Panc1 (cell line): ENCODE measurements at regions of chr5 and their contacts with region 1.

Region 1: GRCh38 chr5:142012792-142013388 is at the start of gene GNPDA1:
- DNase-seq: no peak
- ATAC-seq: peak; percentile 92
- H3K4me3 ChIP-seq: peak within 1 kb of the TSS; percentile 83 to 99
- H3K27ac ChIP-seq: peak within 1 kb of the TSS; percentile 96
- H3K4me1 ChIP-seq: peaks cover 25% of the 10 kb centered on the region
- H3K27me3 ChIP-seq: no peaks in the 10 kb centered on the region
- CTCF ChIP-seq: no peak
- total RNA-seq, gene GNPDA1: 99.9 TPM

Region 2: DNA sequence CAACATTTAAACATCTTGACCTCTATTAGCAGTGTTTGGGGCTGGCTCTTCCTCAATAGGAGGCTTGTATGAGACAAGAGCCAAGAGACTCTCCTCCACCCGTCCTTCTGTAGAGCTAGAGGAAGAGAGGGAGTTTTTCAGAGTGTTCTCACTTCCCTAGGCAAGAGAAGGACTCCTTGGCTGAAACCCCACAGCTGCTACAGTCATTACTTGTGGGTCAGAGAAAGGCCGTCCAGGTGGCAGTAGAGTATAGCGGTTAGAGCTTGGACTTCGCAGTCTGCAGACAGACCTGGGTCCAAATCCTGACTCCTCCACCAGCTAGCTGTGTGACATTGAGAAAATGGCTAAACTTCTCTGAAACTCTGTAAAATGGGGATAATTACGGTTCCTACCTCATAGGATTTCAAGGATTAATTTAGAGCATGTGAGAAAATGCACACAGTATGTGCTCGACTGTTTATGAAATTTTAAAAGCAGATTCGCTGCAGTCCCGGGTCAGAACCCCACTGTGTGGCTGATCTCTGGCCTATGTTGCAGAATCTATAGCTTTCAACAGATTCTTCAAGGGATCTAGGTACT is 250.0 kb before region 1 on chr5:
- CTCF ChIA-PET with region 1: no interaction called
- POLR2A ChIA-PET with region 1: no interaction called
- in situ Hi-C with region 1: no loop called
- intact Hi-C with region 1: no loop called
- DNase-seq: no peak
- ATAC-seq: no peak
- H3K4me3 ChIP-seq: no peak overlapping the region
- H3K27ac ChIP-seq: no peak overlapping the region
- H3K4me1 ChIP-seq: no peaks in the 10 kb centered on the region
- H3K27me3 ChIP-seq: peaks cover 2% of the 10 kb centered on the region; the same call in 1 of the 2 replicates
- CTCF ChIP-seq: no peak

Region 3: DNA sequence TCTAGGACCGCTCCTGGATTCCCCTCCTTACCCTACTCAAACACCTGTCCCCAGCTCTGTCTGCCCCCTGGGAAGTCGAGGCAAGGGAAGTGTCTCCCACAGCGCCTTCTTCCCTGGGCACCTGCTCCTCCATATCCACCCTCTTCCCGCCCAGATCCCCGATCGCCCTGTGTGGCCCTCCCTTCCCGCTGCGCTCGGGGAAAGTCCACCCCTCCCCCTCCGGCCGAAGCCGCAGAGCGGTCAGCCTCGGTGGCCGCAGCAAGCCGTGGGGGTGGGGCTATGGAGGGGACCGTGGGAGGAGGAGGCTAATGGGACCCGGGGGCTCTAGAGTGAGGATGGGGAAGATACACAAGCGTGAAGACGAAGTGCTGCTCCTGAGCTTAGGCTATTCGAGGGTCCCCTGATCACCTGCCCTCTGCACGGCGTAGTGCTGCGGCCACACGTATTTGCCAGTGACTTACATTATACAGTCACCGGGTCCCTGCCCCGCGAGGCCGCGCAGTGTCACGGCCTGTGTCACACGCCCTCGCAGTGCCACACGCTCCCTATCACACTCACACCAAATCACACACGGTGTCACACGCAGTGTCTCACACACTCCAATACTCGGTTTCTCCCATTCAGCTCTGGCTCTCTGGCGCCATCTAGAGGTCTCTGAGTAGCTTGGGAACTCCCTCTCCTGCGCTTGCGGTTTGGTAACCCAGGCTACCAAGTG is 134.0 kb before region 1 on chr5:
- CTCF ChIA-PET with region 1: no interaction called
- POLR2A ChIA-PET with region 1: no interaction called
- in situ Hi-C with region 1: no loop called
- intact Hi-C with region 1: no loop called
- DNase-seq: peak; percentile 86
- ATAC-seq: peak; percentile 84
- H3K4me3 ChIP-seq: peak overlapping the region; percentile 43 to 75
- H3K27ac ChIP-seq: no peak overlapping the region
- H3K4me1 ChIP-seq: peaks cover 14% of the 10 kb centered on the region
- H3K27me3 ChIP-seq: peaks cover 11% of the 10 kb centered on the region
- CTCF ChIP-seq: peak; percentile 97

Region 4: GRCh38 chr5:141986072-141986471 is 26.8 kb before region 1 on chr5:
- CTCF ChIA-PET with region 1: interaction called, 17 read pairs
- POLR2A ChIA-PET with region 1: no interaction called
- in situ Hi-C with region 1: no loop called
- intact Hi-C with region 1: no loop called
- DNase-seq: no peak
- ATAC-seq: no peak
- H3K4me3 ChIP-seq: no peak overlapping the region
- H3K27ac ChIP-seq: no peak overlapping the region
- H3K4me1 ChIP-seq: no peaks in the 10 kb centered on the region
- H3K27me3 ChIP-seq: no peaks in the 10 kb centered on the region
- CTCF ChIP-seq: no peak

Region 5: GRCh38 chr5:142108432-142109330 is 95.8 kb after region 1 on chr5 and contains the start of gene NDFIP1:
- CTCF ChIA-PET with region 1: no interaction called
- POLR2A ChIA-PET with region 1: no interaction called
- in situ Hi-C with region 1: no loop called
- intact Hi-C with region 1: no loop called
- DNase-seq: no peak
- ATAC-seq: peak; percentile 100
- H3K4me3 ChIP-seq: peak within 1 kb of the TSS; percentile 70 to 72
- H3K27ac ChIP-seq: peak within 1 kb of the TSS; percentile 90
- H3K4me1 ChIP-seq: peaks cover 19% of the 10 kb centered on the region
- H3K27me3 ChIP-seq: no peaks in the 10 kb centered on the region
- CTCF ChIP-seq: peak; percentile 22
- total RNA-seq, gene NDFIP1: 40.9 TPM

Region 6: DNA sequence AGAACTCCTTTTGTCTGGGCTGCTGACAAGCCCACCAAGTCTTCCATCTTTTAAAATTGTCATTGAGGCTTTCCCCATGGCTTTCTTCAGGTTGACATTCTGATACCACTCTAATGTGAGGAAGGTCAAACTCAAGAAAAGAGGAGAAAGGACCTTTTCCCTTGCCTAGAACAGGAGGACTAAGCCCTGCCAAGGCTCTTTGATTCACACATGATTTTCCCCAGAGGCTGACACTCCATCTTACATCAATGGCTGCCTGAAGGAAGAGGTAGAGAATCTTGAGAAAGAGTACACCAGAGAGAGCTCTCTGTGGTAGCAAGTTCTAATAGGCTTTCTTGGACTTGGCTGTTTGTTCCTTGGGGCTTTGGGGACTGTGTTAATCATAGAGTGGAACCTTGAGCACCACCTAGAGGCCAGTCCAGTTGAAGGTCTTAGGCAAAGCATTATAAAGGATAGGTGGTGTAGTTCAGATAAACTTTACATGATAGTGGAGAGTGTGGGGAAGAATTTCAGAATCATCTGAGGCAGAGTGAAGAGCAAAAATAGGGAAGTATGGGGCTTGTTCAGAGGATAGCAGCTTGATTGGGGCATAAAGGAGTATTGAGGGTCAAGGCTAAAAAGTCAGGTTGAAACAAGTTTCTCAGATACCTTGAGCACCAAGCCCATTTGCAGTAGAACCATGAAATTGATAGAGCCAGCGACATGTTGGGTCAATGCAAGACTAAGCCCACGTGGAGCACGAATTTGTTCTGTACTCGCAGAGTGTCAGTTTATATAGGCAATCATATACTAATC is 132.4 kb after region 1 on chr5:
- CTCF ChIA-PET with region 1: interaction called, 12 read pairs
- POLR2A ChIA-PET with region 1: no interaction called
- in situ Hi-C with region 1: no loop called
- intact Hi-C with region 1: loop called (anchors 2 kb)
- DNase-seq: peak; percentile 43
- ATAC-seq: peak; percentile 97
- H3K4me3 ChIP-seq: no peak overlapping the region
- H3K27ac ChIP-seq: no peak overlapping the region
- H3K4me1 ChIP-seq: no peaks in the 10 kb centered on the region
- H3K27me3 ChIP-seq: no peaks in the 10 kb centered on the region
- CTCF ChIP-seq: peak; percentile 88

Region 7: GRCh38 chr5:142368529-142368928 is 355.6 kb after region 1 on chr5:
- CTCF ChIA-PET with region 1: no interaction called
- POLR2A ChIA-PET with region 1: no interaction called
- in situ Hi-C with region 1: no loop called
- intact Hi-C with region 1: no loop called
- DNase-seq: no peak
- ATAC-seq: no peak
- H3K4me3 ChIP-seq: no peak overlapping the region
- H3K27ac ChIP-seq: no peak overlapping the region
- H3K4me1 ChIP-seq: peaks cover 28% of the 10 kb centered on the region
- H3K27me3 ChIP-seq: no peaks in the 10 kb centered on the region
- CTCF ChIP-seq: no peak